Endothelial cell of umbilical vein (primary cell): ENCODE measurements at regions of chr1 and their contacts with region 1.

Region 1: DNA sequence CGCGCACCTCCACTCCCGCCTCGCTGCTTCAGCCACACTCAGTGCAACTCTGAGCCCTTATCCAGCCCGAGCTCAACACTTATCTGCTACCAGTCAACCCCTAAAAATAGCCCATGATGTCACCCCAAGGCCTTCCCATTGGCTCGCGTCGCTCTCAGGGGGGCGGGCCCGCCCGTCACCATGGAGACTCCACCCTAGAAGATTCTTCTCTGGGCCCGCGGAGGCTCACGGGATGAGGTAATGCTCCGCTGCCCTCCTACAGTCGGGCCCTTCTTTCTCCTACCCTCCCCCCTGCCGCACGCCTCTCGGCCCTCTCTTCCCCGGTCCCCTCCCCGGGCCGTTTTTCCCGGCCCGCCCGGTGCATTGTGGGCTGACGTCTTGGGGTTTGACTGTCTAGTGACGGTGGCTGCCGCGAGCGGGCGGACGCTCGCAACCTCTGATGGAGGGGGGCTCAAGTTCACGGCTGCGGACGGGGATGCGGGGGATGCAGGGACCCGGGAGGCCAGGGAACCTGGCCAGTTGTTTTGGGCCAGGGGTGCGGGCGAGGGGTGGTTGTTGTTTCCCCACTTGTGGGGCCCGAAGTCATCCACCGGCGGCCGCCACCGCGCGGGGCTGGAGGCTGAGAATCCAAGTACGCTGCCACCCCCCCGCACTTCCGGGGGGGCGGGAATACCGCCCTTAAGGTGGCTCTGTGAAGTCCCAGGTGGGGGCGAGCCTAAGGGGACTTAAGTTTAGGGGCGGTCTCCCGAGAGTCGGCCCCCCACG is at the start of gene JUN:
- DNase-seq: peak; percentile 100
- H3K4me3 ChIP-seq: peak within 1 kb of the TSS; percentile 60 to 91 (median 80)
- H3K27ac ChIP-seq: peak within 1 kb of the TSS; percentile 97
- H3K4me1 ChIP-seq: peaks cover 30% of the 10 kb centered on the region
- H3K27me3 ChIP-seq: no peaks in the 10 kb centered on the region
- CTCF ChIP-seq: no peak
- POLR2A ChIP-seq: peak; percentile 100
- total RNA-seq, gene JUN: 81.1 and 88.3 TPM in 2 replicates

Region 2: GRCh38 chr1:58739856-58740466 is 44.2 kb before region 1 on chr1:
- CTCF ChIA-PET with region 1: interaction called, 6 read pairs
- POLR2A ChIA-PET with region 1: interaction called, 6 read pairs
- dilution Hi-C with region 1: no loop called
- intact Hi-C with region 1: loop called (anchors 1 kb)
- DNase-seq: peak; percentile 73
- H3K4me3 ChIP-seq: no peak overlapping the region
- H3K27ac ChIP-seq: no peak overlapping the region
- H3K4me1 ChIP-seq: peaks cover 3% of the 10 kb centered on the region
- H3K27me3 ChIP-seq: no peaks in the 10 kb centered on the region
- CTCF ChIP-seq: peak; percentile 31 to 38
- POLR2A ChIP-seq: no peak

Region 3: GRCh38 chr1:58848818-58849411 is 64.7 kb after region 1 on chr1:
- CTCF ChIA-PET with region 1: interaction called, 5 read pairs
- POLR2A ChIA-PET with region 1: interaction called, 4 read pairs
- dilution Hi-C with region 1: no loop called
- intact Hi-C with region 1: loop called (anchors 1 kb)
- DNase-seq: peak; percentile 95
- H3K4me3 ChIP-seq: no peak overlapping the region
- H3K27ac ChIP-seq: peak overlapping the region; percentile 95
- H3K4me1 ChIP-seq: peaks cover 30% of the 10 kb centered on the region
- H3K27me3 ChIP-seq: no peaks in the 10 kb centered on the region
- CTCF ChIP-seq: peak; percentile 8 to 24
- POLR2A ChIP-seq: no peak

Region 4: GRCh38 chr1:58903514-58904298 is 119.5 kb after region 1 on chr1:
- CTCF ChIA-PET with region 1: interaction called, 11 read pairs
- POLR2A ChIA-PET with region 1: no interaction called
- dilution Hi-C with region 1: no loop called
- intact Hi-C with region 1: loop called (anchors 1 kb)
- DNase-seq: peak; percentile 94
- H3K4me3 ChIP-seq: peak overlapping the region in 2 of 3 experiments; percentile 24 to 41
- H3K27ac ChIP-seq: peak overlapping the region; percentile 64
- H3K4me1 ChIP-seq: peaks cover 46% of the 10 kb centered on the region
- H3K27me3 ChIP-seq: no peaks in the 10 kb centered on the region
- CTCF ChIP-seq: no peak
- POLR2A ChIP-seq: peak; percentile 95

Region 5: DNA sequence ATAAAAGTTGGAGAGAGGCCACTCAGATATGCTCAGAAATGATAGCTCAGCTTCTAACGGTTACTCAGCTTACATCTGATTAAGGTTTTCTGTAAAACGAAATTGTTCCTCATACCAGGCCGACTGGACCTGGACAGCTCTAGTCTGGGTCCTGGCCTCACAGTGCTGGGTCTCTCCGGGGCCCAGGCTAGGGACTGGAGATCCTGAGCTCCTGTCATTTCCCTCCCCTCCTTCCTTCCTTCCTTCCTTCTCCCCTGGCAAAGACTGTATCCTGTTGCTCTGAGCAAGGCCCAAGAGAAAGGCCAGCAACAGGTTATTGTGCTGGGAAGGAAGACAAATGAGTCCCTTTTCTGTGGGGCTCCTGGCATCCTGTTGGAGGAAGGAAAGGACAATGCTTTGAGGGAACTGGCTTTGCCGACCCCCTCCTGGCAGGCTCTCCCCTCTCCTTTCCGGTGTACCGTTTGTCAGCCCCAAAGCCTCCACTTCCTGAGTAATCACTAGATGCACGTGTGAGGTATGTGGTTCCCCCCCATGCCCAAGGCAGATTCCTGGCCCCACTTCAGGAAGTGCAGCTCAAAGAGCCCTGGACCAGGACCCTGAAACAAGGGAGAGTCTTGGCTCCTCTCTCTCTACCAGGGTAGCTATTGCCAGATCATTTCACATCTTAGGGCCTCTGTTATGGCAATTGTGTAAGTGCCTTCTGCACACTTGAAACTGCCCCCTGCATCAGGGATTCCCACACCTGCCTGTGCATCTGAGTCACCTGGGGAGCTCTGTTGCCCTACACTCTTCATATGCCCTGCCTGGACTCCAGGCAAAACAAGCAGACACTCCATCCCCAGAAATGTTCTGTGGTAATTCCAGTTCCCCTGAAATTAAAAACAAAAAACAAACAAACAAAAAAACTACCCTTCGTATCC is 300.0 kb after region 1 on chr1:
- CTCF ChIA-PET with region 1: no interaction called
- POLR2A ChIA-PET with region 1: interaction called, 9 read pairs
- dilution Hi-C with region 1: no loop called
- intact Hi-C with region 1: loop called (anchors 1 kb)
- DNase-seq: peak; percentile 67
- H3K4me3 ChIP-seq: no peak overlapping the region
- H3K27ac ChIP-seq: peak overlapping the region; percentile 49
- H3K4me1 ChIP-seq: peaks cover 23% of the 10 kb centered on the region
- H3K27me3 ChIP-seq: no peaks in the 10 kb centered on the region
- CTCF ChIP-seq: no peak
- POLR2A ChIP-seq: peak; percentile 20

Region 6: GRCh38 chr1:59308839-59309238 is 524.7 kb after region 1 on chr1:
- CTCF ChIA-PET with region 1: no interaction called
- POLR2A ChIA-PET with region 1: no interaction called
- dilution Hi-C with region 1: no loop called
- intact Hi-C with region 1: no loop called
- DNase-seq: no peak
- H3K4me3 ChIP-seq: no peak overlapping the region
- H3K27ac ChIP-seq: no peak overlapping the region
- H3K4me1 ChIP-seq: no peaks in the 10 kb centered on the region
- H3K27me3 ChIP-seq: no peaks in the 10 kb centered on the region
- CTCF ChIP-seq: no peak
- POLR2A ChIP-seq: no peak

Region 7: GRCh38 chr1:59422921-59423575 is 638.9 kb after region 1 on chr1:
- CTCF ChIA-PET with region 1: no interaction called
- POLR2A ChIA-PET with region 1: no interaction called
- dilution Hi-C with region 1: no loop called
- intact Hi-C with region 1: loop called (anchors 2 kb)
- DNase-seq: peak; percentile 97
- H3K4me3 ChIP-seq: no peak overlapping the region
- H3K27ac ChIP-seq: peak overlapping the region; percentile 13
- H3K4me1 ChIP-seq: peaks cover 10% of the 10 kb centered on the region
- H3K27me3 ChIP-seq: no peaks in the 10 kb centered on the region
- CTCF ChIP-seq: no peak
- POLR2A ChIP-seq: no peak

Region 8: DNA sequence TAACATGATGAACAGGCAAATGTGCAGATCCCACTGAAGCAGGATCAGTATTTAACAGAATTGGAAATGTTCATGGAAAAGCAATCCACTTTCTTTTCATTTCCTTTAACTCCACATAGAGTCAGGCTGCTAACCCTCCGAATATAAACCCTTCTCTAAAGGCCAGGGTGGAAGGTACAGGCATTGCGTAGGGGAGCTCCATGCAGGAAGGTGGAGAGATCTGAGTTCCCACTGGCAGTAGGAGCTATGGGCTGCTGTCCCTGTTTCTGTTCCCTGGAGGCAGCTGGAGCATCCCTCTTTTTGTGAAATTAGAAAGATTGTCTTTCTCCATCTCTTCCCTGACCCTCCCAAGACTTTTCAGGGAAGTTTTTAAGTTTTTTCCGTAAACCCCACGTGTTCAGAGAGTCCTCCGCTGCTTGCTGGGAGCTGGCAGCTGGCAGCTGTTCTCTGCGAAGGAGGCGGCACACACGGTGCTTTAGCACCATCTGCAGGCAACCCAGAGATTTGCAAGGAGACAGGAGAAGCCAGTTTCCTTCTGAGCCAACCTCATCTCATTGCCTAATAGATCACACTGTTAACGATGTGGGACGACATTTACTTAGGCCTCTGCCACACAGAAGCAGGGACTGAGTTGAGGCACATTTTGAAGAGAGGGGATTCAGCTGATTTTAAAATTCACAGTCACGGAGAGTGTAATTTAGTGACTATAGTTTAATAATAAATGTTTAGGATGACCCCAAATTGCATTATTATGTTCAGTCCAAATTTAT is 975.2 kb after region 1 on chr1:
- CTCF ChIA-PET with region 1: interaction called, 9 read pairs
- POLR2A ChIA-PET with region 1: interaction called, 6 read pairs
- dilution Hi-C with region 1: no loop called
- intact Hi-C with region 1: loop called (anchors 1 kb)
- DNase-seq: peak; percentile 85
- H3K4me3 ChIP-seq: no peak overlapping the region
- H3K27ac ChIP-seq: peak overlapping the region; percentile 44
- H3K4me1 ChIP-seq: peaks cover 5% of the 10 kb centered on the region
- H3K27me3 ChIP-seq: no peaks in the 10 kb centered on the region
- CTCF ChIP-seq: peak; percentile 86 to 92
- POLR2A ChIP-seq: no peak